Ovary (tissue), 10 donors: ENCODE measurements at regions of chr3 and their contacts with region 1.

Region 1: GRCh38 chr3:4930501-4930900 is 48.7 kb upstream of the BHLHE40 start:
- DNase-seq: no peak
- H3K4me3 ChIP-seq: no peak overlapping the region
- H3K27ac ChIP-seq: no peak overlapping the region
- H3K4me1 ChIP-seq: no peaks in the 10 kb centered on the region
- H3K27me3 ChIP-seq: no peaks in the 10 kb centered on the region
- CTCF ChIP-seq: no peak
- EP300 ChIP-seq: no peak
- POLR2A ChIP-seq: no peak

Region 2: GRCh38 chr3:3705090-3705775 is 1225.3 kb before region 1 on chr3:
- intact Hi-C with region 1: loop called in 1 of 4 experiments (anchors 5 kb)
- DNase-seq: peak in 3 of 5 donors; percentile 19 to 36 (median 21)
- H3K4me3 ChIP-seq: no peak overlapping the region
- H3K27ac ChIP-seq: no peak overlapping the region
- H3K4me1 ChIP-seq: no peaks in the 10 kb centered on the region
- H3K27me3 ChIP-seq: no peaks in the 10 kb centered on the region
- CTCF ChIP-seq: no peak
- EP300 ChIP-seq: no peak
- POLR2A ChIP-seq: no peak

Region 3: GRCh38 chr3:5390221-5390620 is 459.7 kb after region 1 on chr3:
- intact Hi-C with region 1: no loop called
- DNase-seq: no peak
- H3K4me3 ChIP-seq: no peak overlapping the region
- H3K27ac ChIP-seq: no peak overlapping the region
- H3K4me1 ChIP-seq: no peaks in the 10 kb centered on the region
- H3K27me3 ChIP-seq: no peaks in the 10 kb centered on the region
- CTCF ChIP-seq: no peak
- EP300 ChIP-seq: no peak
- POLR2A ChIP-seq: no peak